ENCODE measurements at regions of chr13 and their contacts with region 1.

Region 1: DNA sequence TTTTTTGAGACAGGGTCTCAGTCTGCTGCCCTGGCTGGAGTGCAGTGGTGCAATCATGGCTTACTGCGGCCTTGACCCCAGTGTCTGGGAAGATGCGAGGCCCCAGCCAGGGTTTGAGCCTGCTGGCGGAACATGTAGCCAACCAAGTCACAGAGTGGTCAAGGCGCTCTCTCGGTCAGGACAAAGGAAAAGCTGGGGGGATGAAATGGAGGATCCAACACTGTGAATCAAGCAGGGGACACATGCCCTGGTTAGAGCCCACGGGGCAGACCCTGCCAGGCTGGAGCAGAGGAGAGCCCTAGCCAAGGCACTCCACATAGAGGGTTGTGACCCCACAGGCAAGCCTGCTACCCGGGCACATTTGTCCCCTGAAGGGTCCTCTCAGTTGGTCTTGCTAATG is 10.1 kb downstream of the TUBA3C start:
- DNase-seq: no peak
- H3K4me3 ChIP-seq: no peak overlapping the region
- H3K27ac ChIP-seq: no peak overlapping the region
- H3K4me1 ChIP-seq: no peaks in the 10 kb centered on the region
- H3K27me3 ChIP-seq: no peaks in the 10 kb centered on the region
- CTCF ChIP-seq: no peak

Region 2: GRCh38 chr13:19103140-19103539 is 68.4 kb before region 1 on chr13:
- CTCF ChIA-PET with region 1: no interaction called
- dilution Hi-C with region 1: no loop called
- in situ Hi-C with region 1: no loop called
- intact Hi-C with region 1: no loop called
- DNase-seq: no peak
- H3K4me3 ChIP-seq: no peak overlapping the region
- H3K27ac ChIP-seq: no peak overlapping the region
- H3K4me1 ChIP-seq: no peaks in the 10 kb centered on the region
- H3K27me3 ChIP-seq: no peaks in the 10 kb centered on the region
- CTCF ChIP-seq: no peak

Region 3: DNA sequence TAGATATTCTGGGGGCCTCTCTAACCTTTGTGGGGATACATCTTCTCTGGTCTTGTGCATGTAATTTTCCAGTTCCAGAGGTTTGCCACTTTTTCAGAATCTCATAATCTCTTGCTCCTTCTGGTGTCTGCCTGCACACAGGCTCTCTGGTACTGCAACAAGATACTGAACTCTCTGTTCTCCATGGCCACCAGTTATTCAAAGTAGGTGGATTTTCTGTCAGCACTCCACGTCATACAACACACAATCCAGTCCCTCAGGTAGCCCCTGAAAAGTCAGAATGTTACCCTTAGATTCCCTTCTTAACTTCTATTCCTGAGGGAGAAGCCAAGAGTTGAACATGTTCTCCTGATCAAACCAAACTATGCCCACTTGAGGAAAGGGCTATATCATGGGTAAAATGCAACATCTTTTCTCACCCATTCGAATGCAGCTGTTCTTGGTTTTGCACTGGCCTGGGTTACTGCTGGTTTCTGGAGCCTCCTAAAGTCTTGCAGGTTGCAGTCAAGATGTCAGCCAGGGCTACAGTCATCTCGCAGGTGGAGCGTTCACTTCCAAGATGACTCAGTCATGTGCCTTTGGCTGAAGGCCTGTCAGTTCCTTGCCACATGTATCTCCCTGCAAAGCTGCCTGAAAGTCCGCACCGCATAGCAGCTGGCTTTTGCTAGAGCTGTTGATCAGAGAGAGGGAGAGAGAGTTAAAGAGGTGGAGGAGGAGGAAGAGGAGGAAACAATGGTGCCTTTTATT is 67.7 kb after region 1 on chr13:
- CTCF ChIA-PET with region 1: no interaction called
- dilution Hi-C with region 1: loop called (anchors 5 kb)
- in situ Hi-C with region 1: no loop called
- intact Hi-C with region 1: no loop called
- DNase-seq: no peak
- H3K4me3 ChIP-seq: no peak overlapping the region
- H3K27ac ChIP-seq: no peak overlapping the region
- H3K4me1 ChIP-seq: no peaks in the 10 kb centered on the region
- H3K27me3 ChIP-seq: no peaks in the 10 kb centered on the region
- CTCF ChIP-seq: no peak

Measured in mammary epithelial cell (primary cell).